ENCODE measurements at regions of chr4 and their contacts with region 1.

Region 1: DNA sequence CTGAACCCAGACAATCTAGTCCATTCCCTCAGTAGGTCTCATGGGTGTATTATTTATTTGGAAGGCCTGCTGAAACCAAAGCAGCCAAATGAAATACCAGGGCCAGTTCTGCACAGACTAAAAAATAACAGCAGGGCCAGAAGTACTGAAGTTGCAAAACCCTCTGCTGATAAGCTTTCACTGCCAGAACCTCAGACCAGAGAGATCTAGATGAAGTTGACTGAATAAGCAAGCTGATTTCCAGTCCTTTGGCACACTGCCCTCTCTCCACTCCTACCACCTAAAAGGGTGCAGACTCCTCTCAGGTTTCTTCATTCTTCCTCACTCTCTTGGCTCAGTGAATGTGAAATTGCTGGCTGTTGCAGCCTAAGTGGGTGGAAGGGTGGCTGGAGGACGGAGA is 276.7 kb upstream of the KLF3 start:
- DNase-seq: peak; percentile 73 to 88 (median 83)
- ATAC-seq: peak; percentile 93 to 96
- H3K4me3 ChIP-seq: no peak overlapping the region
- H3K27ac ChIP-seq: no peak overlapping the region
- H3K4me1 ChIP-seq: peaks cover 8% of the 10 kb centered on the region
- H3K27me3 ChIP-seq: no peaks in the 10 kb centered on the region

Region 2: GRCh38 chr4:38290366-38290765 is 97.0 kb before region 1 on chr4:
- intact Hi-C with region 1: no loop called
- DNase-seq: no peak
- ATAC-seq: no peak
- H3K4me3 ChIP-seq: no peak overlapping the region
- H3K27ac ChIP-seq: no peak overlapping the region
- H3K4me1 ChIP-seq: no peaks in the 10 kb centered on the region
- H3K27me3 ChIP-seq: no peaks in the 10 kb centered on the region

Region 3: DNA sequence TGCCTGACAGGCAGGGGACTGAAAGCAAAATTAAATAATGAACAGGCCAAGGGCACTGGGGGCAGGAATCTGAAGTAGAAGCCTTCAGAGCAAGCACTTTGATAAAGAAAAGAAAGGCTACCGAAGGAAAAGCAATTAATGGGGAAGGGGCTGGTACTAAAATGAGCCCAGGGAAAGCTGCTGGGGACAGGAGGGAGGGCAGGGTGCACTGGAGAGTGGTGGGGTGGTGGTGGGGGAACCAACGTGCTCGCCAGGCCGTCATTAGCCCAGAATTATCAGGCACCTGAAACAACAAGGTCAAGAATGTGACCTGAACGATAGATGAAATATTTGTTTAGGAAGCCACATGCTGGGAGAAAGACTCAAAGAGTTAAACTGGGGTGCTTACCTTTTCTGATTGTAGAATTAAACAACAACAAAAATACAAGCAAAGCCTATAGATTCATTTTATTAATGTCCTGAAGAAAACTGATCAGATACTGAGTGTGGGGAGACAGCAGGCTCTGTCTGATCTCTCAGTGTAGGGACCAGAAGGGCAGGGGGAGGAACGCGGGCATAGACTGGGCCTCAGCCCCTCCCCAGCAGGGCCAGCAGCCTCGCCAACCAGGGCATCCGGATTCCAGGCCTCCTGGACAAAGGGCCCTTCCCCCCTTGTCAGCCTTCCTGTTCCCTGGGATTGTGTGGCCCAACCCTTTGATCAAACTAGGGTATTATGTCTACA is 37.0 kb after region 1 on chr4:
- intact Hi-C with region 1: no loop called
- DNase-seq: peak; percentile 24 to 63 (median 53)
- ATAC-seq: peak; percentile 74 to 92
- H3K4me3 ChIP-seq: no peak overlapping the region
- H3K27ac ChIP-seq: no peak overlapping the region
- H3K4me1 ChIP-seq: no peaks in the 10 kb centered on the region
- H3K27me3 ChIP-seq: no peaks in the 10 kb centered on the region

Region 4: GRCh38 chr4:38663801-38664705 is 276.7 kb after region 1 on chr4 and contains the start of gene KLF3:
- intact Hi-C with region 1: loop called in 1 of 4 experiments (anchors 5 kb)
- DNase-seq: peak; percentile 97 to 98 (median 98)
- ATAC-seq: peak; percentile 91 to 93
- H3K4me3 ChIP-seq: peak within 1 kb of the TSS; percentile 96
- H3K27ac ChIP-seq: peak within 1 kb of the TSS; percentile 100
- H3K4me1 ChIP-seq: no peaks in the 10 kb centered on the region
- H3K27me3 ChIP-seq: no peaks in the 10 kb centered on the region
- total RNA-seq, gene KLF3: 22.2 to 29.3 (median 25.4) TPM